ENCODE measurements at regions of chr2 and their contacts with region 1.

Region 1: GRCh38 chr2:25323042-25323514 is 18.6 kb downstream of the DNMT3A start:
- H3K4me3 ChIP-seq: no peak overlapping the region
- H3K27ac ChIP-seq: no peak overlapping the region
- H3K4me1 ChIP-seq: no peaks in the 10 kb centered on the region
- CTCF ChIP-seq: no peak

Region 2: DNA sequence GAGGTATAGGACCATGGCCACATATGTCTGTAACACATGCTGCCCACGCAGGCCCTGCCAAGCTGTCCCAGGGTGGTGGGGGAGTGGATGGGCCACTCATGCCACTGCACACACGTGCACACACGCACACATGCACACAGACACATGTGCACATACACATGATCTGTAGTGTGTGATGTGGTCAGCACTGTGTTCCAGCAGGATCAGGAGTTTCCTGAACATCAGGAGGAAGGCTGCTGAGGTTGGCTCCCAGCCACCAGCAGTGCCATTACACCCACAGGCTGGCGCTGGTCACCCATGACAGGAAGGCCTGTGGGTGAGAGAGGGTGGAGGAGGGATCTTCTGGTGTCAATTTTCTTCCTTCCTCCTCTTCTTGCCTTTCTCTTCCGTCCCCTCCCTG is 199.4 kb before region 1 on chr2:
- CTCF ChIA-PET with region 1: no interaction called
- POLR2A ChIA-PET with region 1: no interaction called
- H3K4me3 ChIP-seq: no peak overlapping the region
- H3K27ac ChIP-seq: no peak overlapping the region
- H3K4me1 ChIP-seq: no peaks in the 10 kb centered on the region
- CTCF ChIP-seq: no peak

Region 3: DNA sequence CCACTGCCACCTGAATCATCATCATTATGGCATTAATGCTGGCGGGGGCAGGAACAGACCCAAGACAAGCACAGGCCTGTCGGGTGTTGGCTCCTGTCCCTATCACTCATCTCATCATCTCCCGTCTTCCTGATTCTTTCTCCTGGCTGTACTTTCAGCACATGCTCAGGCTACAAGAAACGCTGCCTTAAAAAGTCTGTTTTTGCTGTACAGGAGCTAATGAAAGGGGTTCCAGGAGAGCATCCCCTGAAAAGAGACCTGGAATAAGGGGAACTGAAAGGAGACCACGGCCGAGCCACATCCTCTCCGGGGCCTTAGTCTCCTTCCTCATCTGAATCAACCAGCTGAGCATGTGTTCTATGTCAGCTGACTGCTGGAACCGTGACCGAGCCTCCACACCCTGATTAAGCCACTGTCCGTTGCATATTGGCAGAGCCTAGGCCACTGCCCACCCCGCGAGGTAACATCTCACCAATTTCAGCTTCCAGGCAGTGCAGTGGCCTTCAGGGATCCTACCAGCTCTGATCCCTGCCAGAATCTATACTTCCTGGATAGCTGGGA is 43.9 kb before region 1 on chr2:
- CTCF ChIA-PET with region 1: no interaction called
- POLR2A ChIA-PET with region 1: no interaction called
- H3K4me3 ChIP-seq: no peak overlapping the region
- H3K27ac ChIP-seq: no peak overlapping the region
- H3K4me1 ChIP-seq: no peaks in the 10 kb centered on the region
- CTCF ChIP-seq: no peak

Region 4: DNA sequence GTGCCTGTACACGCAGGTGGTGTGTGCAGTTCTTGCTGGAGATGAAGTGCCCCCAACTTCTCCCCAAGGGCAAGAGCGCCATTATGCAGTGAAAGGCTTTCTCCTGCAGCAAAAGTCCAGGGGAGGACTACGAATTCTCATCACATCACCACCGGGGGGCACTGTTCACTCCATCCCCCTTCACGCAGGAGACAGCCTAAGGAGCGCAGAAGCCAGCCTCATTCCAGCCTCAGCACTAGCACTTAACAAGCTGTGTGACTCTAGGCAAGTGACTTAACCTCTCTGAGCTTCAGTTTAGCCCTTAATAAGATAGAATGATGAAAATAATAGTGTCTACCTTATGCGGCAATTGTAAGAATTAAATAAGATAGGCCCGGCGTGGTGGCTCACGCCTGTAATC is 13.7 kb before region 1 on chr2:
- CTCF ChIA-PET with region 1: interaction called, 10 read pairs
- POLR2A ChIA-PET with region 1: no interaction called
- H3K4me3 ChIP-seq: no peak overlapping the region
- H3K27ac ChIP-seq: no peak overlapping the region
- H3K4me1 ChIP-seq: peaks cover 3% of the 10 kb centered on the region; the same call in 1 of the 2 replicates
- CTCF ChIP-seq: 0 out of 2 replicates have a peak, but pooled peaks have one; percentile 13